OCI-LY7 (cell line): ENCODE measurements at regions of chr1 and their contacts with region 1.

Region 1: DNA sequence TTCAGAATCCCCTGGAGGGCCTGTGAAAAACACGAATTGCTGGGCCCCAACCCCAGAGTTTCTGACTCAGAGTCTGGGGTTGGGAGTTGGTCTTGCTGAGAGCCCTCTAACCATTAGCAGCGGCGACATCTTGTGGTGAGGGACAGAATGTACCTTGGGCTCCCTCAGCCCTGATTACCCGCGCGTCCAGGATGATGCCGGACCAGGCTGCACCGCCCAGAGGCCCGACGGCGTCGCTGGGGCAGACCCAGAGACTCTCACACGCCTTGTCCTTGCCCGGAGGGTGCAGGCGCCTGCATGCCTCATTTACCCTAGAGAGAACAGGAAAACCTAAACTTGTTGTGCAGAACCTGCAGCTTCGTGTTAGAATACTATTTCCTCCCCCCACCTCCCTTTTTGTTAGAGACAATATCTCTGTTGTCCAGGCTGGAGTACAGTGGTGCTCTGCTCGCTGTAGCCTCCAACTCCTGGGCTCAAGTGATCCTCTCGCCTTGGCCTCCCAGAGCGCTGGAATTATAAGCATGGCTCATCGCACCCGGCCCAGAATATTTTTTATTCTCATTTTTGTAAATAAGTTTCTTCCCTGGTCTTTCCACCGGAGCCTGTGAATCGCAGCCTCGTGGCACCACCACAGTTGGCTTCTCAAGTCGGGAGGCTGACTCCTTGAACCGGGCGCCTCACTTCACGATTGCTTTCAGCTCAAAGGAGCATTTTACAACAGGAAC is 22.2 kb upstream of the RD3 start:
- DNase-seq: peak; percentile 84
- H3K4me3 ChIP-seq: peak overlapping the region; percentile 7
- H3K27ac ChIP-seq: no peak overlapping the region
- H3K4me1 ChIP-seq: peaks cover 45% of the 10 kb centered on the region
- CTCF ChIP-seq: peak; percentile 86

Region 2: GRCh38 chr1:210505601-210506496 is 1008.3 kb before region 1 on chr1:
- CTCF ChIA-PET with region 1: no interaction called
- POLR2A ChIA-PET with region 1: no interaction called
- intact Hi-C with region 1: no loop called
- DNase-seq: no peak
- H3K4me3 ChIP-seq: no peak overlapping the region
- H3K27ac ChIP-seq: no peak overlapping the region
- H3K4me1 ChIP-seq: no peaks in the 10 kb centered on the region
- CTCF ChIP-seq: no peak

Region 3: DNA sequence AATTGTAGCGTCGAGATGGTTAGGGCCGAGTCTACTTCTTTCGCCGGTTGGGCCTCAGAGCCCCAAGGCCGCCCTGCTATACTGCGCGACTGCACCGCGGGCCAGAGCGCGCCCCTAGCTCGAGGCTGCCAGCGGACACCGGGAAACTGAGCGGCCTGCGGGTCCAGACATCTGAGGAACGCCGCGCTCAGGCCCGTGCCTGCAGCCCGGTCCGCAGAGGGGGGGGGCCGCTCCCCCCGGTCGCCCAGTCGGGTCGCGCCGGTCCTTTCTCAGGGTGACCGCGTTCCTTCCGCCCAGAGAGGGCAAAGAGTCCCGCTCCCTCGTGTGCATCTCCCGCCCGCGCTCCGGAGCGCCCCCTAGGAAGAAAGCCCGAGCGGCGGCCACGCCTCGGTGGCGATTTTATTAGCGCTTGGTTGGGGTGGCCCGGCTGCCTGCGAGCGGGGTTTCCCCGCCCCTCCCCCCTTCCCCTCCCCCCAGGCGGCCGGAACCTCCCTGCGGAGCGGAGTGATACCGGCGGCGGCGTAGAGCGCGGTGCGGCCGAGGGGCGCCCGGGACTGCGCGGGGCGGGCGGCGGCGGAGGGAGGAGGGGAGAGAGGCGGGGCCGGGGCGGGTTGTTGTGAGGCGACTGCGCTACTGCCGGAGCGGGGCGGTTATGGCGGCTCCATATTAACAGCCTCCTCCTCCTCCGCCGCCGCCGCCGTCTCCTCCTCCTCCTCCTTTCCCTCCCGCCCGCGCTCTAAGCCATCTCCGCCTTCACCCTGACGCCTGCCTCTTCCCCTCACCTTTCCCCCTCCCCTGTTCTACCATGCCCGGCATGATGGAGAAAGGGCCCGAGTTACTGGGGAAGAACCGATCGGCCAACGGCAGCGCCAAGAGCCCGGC is 255.2 kb before region 1 on chr1 and contains the start of gene RCOR3:
- CTCF ChIA-PET with region 1: no interaction called
- POLR2A ChIA-PET with region 1: no interaction called
- intact Hi-C with region 1: loop called (anchors 2 kb)
- DNase-seq: peak; percentile 92
- H3K4me3 ChIP-seq: peak within 1 kb of the TSS; percentile 87
- H3K27ac ChIP-seq: peak within 1 kb of the TSS; percentile 96
- H3K4me1 ChIP-seq: peaks cover 16% of the 10 kb centered on the region
- CTCF ChIP-seq: peak; percentile 67
- total RNA-seq, gene RCOR3: 32.3 and 34.8 TPM in 2 replicates